ENCODE measurements at regions of chr17 and their contacts with region 1.

Region 1: GRCh38 chr17:29124117-29124924 is 55.9 kb downstream of the MYO18A start:
- DNase-seq: peak; percentile 51
- ATAC-seq: peak; percentile 87
- H3K4me3 Mint-ChIP-seq: no peak overlapping the region
- H3K27ac Mint-ChIP-seq: no peak overlapping the region
- H3K4me1 Mint-ChIP-seq: peaks cover 3% of the 10 kb centered on the region; the same call in 1 of the 2 replicates
- H3K27me3 Mint-ChIP-seq: no peaks in the 10 kb centered on the region
- CTCF ChIP-seq: no peak

Region 2: DNA sequence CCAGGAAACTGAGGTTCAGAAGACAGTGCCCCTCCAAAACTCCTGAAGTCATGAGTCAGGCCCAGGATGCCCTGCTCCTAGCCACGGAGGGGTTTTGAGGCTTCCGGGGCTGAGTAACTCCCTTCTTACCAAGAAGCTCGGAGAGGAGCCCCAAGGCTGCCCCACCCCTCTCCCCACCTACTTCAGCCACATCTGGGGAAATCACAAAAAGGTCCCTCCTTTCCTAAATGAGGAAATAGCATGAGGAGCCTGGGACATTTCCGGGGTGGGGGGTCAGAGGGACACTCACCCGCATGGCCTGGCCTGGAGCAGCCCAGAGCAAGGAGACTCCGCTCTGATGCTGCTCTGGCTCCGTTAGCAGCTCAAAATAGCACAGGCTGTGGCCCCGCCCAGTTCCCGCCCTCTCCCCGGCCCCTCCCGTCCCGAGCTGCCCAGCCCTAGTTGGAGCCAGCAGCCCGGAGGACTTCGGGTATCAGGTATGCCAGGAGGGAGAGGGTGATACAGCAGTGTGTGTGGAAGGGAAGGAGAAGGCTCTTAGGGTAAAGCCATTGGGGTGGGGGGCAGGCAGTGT is 15.8 kb after region 1 on chr17:
- CTCF ChIA-PET with region 1: interaction called, 269 read pairs
- POLR2A ChIA-PET with region 1: interaction called, 5 read pairs
- DNase-seq: peak; percentile 83
- ATAC-seq: peak; percentile 88
- H3K4me3 Mint-ChIP-seq: no peak overlapping the region
- H3K27ac Mint-ChIP-seq: peak overlapping the region; percentile 69; the same call in 1 of the 2 replicates
- H3K4me1 Mint-ChIP-seq: peaks cover 34% of the 10 kb centered on the region
- H3K27me3 Mint-ChIP-seq: no peaks in the 10 kb centered on the region
- CTCF ChIP-seq: no peak

Region 3: DNA sequence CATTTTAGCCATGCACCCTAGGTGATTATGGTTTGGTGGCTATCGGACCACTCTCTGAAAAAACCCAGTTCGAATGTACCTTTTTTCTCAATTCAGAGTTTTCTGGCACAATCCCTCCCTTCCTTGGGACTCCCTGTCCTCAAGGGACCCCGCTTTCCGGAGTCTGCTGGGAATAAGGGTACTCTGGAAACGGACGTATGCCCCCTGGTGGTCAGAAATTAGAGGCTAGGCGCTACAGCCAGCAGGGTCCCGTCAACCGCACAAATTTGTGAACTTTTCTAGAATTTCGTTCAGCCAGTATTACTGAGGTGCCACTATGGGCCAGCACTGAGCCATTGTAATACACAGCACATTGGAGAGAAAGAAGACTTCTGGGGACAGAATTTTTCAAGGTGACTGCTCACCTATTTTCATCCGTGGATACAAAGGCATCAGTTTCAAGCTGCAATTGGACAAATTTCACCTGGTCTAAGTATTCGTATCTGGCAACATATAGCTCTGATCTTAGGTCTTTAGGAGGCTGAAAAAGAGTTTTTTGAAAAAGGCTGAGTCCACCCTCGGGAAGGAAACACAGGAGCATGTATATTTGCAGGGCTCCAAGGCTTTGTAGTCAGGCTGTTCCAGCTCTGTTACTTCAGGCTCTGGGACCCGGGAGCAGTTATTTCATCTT is 95.2 kb after region 1 on chr17:
- CTCF ChIA-PET with region 1: interaction called, 68 read pairs
- POLR2A ChIA-PET with region 1: no interaction called
- DNase-seq: peak; percentile 89
- ATAC-seq: peak; percentile 97
- H3K4me3 Mint-ChIP-seq: no peak overlapping the region
- H3K27ac Mint-ChIP-seq: no peak overlapping the region
- H3K4me1 Mint-ChIP-seq: peaks cover 6% of the 10 kb centered on the region
- H3K27me3 Mint-ChIP-seq: no peaks in the 10 kb centered on the region
- CTCF ChIP-seq: peak; percentile 82

Region 4: DNA sequence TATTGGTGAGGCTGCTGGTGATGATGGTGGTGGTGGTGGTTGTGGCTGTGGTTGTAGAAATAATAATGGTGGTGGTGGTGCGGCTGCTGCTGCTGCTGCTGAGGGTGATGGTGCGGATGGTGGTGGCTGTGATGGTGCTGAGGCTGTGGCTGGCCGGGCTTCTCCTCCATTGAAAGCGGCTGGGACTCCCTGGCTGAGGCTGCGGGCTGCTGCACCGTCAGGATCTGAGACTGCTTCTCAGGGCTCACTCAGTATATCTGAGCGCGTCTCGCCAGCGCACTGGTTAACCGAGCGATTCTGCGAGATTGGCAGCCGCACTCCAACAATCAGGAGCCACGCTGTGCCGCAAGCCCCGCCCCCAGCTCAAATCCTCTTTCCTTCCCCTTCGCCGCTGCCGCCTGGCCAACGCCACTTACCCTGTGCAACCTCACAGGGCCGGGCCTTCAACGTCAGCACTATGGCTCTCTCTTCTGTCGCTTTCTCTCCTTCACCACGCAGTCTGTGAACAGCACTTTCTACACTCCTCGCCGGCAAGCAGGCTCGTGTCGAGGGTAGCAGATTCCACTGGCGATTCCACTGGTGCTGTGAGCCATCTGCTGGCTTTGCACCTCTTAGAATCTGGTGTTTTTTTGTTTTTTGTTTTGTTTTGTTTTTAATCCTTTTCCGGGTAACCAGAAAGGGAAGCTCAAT is 169.7 kb after region 1 on chr17 and contains the start of gene NUFIP2:
- CTCF ChIA-PET with region 1: interaction called, 17 read pairs
- POLR2A ChIA-PET with region 1: no interaction called
- DNase-seq: peak; percentile 99
- ATAC-seq: peak; percentile 94
- H3K4me3 Mint-ChIP-seq: peak within 1 kb of the TSS; percentile 100
- H3K27ac Mint-ChIP-seq: peak within 1 kb of the TSS; percentile 99
- H3K4me1 Mint-ChIP-seq: peaks cover 32% of the 10 kb centered on the region
- H3K27me3 Mint-ChIP-seq: no peaks in the 10 kb centered on the region
- CTCF ChIP-seq: no peak
- total RNA-seq, gene NUFIP2: 87.1 to 93.1 TPM (median 90.5 TPM) in 3 replicates

Measured in WTC11 (cell line).